ENCODE measurements at regions of chr10 and their contacts with region 1.

Region 1: DNA sequence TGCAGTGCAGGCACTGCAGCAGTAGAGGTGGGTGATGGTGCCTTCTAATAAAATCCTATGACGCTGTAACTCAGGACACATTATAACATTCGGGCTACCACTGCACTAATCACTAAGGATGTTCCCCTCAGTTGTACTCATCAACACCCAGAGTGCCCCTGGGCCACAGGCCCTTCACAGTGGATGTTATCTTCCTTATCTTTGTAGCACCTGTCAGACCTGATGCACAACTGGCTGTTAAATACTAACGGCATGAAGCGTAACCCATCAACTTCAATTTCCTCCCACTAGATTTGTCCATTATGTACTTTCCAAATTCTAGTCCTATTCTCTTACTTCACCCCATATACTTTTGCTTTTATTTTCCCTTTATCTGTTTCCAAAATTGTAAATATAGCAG is 66.3 kb downstream of the PARD3 start:
- DNase-seq: no peak
- H3K4me3 ChIP-seq: no peak overlapping the region
- H3K27ac ChIP-seq: no peak overlapping the region
- H3K4me1 ChIP-seq: no peaks in the 10 kb centered on the region
- H3K27me3 ChIP-seq: no peaks in the 10 kb centered on the region
- CTCF ChIP-seq: no peak
- POLR2A ChIP-seq: no peak

Region 2: DNA sequence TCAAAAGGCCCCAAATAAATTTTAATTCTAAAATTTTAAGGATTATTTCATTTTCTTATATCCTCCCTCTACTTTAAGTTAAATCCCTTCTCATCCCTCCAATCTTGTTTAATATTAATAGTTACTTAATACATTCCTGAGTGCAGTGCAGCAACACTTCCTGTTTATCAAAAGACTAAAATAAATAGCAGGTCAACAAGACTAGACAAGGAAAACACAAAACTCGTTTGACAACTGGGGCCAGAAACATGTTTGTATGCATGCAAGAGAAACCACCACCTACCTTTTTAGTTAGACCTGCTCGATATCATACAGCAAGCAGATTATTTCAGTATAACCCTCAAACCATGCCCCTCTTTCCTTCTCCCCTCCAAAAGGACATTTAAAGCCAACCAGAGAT is 29.5 kb before region 1 on chr10:
- intact Hi-C with region 1: loop called (anchors 2 kb)
- DNase-seq: no peak
- H3K4me3 ChIP-seq: no peak overlapping the region
- H3K27ac ChIP-seq: peak overlapping the region; percentile 19 to 30
- H3K4me1 ChIP-seq: peaks cover 0 to 7% of the 10 kb centered on the region in 2 donors
- H3K27me3 ChIP-seq: no peaks in the 10 kb centered on the region
- CTCF ChIP-seq: no peak
- POLR2A ChIP-seq: no peak

Measured in breast epithelium (tissue), 4 donors.